Activated CD4-positive, alpha-beta T cell treated with anti-CD3 and anti-CD28 coated beads, Interleukin-2, amount 10 ng/mL, durations not matched to agents 24 days and 14 days (primary cell): ENCODE measurements at regions of chr17 and their contacts with region 1.

Region 1: DNA sequence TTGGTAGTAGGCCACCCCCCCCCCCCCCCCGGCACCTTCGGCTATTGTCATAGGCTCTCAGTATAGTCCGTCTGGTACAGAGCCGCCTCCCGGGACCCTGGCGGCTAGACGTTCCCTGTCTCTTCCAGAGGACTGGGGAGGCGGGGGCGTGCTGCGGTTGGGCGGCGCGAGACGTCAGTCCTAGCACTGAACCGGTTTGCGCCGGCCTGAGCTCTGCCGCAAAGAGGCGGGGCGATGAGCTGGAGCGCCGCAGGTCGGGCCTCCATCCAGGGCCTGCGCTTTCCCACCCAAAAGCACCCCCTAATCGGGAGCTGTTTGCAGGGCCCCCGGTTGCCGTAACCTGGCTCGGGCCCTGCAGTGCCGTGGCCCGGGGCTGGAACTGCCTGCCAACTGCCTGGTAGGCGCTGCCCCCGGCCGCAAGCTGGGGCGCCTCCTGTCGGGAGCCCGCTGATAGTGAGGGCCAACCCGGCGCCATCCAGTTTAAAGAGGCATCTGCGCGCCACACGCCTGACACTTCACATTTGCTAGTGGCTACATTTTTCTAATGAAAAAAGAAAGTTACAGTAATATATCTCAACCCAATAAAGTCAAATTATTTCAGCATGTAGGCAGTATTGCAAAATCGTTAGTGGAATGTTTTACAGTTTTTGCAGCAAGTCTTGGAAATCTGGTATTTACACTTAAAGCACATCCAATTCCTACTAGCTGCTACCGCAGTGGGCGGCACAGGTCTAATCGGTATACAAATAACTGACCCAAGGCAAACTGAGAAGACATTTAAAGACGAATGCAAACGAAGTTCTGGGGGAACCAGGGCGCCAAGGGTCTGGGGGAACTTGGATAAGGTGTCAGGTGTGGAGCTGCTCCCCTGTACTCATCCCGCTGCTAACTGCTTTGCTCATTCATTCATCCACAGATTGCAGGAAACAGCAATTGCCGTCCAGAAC is 748 bp upstream of the USP22 start:
- DNase-seq: peak; percentile 99
- H3K4me3 Mint-ChIP-seq: peak overlapping the region; percentile 82
- H3K27ac Mint-ChIP-seq: peak overlapping the region; percentile 91
- H3K4me1 Mint-ChIP-seq: peaks cover 25% of the 10 kb centered on the region
- H3K27me3 Mint-ChIP-seq: peaks cover 4% of the 10 kb centered on the region

Region 2: DNA sequence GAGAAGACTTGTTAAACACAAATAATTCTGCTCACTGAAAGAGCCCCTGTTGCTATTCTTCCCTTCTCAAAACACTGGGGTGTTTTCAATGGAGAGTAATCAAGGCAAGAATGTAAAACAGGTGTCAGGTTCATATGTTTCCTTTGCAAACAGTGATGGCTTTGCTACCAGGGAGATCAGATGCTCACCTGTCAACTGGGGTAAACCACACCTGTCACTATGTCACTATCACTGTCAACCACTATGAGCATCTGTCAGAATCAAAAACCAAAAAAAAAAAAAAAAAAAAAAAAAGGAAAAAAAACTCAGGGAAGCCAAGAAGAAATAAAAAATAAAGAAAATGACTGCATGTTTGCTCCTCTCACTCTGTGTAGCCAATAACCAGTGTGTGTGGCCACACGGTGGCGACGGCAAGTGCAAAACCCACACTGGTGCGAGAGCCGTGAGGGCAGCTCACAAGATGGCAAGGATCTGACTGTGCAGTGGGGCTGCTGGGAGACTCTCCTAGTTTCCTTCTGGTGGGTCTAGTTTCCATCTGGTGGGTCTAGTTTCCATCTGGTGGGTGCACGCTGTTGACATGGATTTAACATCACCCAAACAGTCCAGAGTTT is 23.5 kb before region 1 on chr17:
- intact Hi-C with region 1: loop called (anchors 1 kb)
- DNase-seq: peak; percentile 78
- H3K4me3 Mint-ChIP-seq: no peak overlapping the region
- H3K27ac Mint-ChIP-seq: no peak overlapping the region
- H3K4me1 Mint-ChIP-seq: peaks cover 22% of the 10 kb centered on the region
- H3K27me3 Mint-ChIP-seq: no peaks in the 10 kb centered on the region

Region 3: DNA sequence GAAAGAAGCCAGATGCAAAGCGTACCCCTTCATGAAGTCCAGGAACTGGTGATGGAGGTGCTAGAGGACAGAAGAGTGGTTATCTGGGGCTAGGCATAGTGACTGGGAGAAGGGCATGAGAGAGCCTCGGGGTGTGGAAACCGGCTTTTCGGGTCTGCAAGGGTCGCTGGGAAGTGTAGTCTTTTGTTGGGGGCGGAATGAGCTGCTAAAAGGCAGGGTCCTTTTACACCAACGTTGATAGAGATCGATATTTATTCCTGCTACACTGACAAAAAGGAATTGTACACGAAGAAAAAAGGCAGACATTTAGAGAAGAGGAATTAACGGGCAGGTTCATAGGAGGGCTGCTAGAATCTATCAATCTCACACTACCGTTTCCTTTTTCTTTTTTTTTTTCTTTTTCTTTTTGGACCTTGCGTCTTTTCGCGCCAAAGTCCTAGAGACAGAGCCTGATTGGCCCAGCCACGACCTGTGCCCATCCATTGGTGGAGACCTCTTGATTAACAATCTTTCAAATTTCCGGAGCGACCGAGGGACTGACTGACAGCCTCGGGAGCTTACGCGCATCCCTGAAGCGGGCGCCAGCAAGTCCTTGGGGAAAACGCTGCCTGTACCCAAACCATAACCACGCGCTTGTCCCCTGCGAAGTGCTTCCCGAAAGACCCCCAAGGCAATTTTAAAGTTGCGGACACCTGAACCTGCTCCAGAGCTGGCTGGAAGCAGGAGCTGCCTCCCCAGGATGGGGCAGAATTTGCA is 55.6 kb after region 1 on chr17:
- intact Hi-C with region 1: loop called (anchors 1 kb)
- DNase-seq: peak; percentile 93
- H3K4me3 Mint-ChIP-seq: peak overlapping the region; percentile 92
- H3K27ac Mint-ChIP-seq: peak overlapping the region; percentile 98
- H3K4me1 Mint-ChIP-seq: peaks cover 15% of the 10 kb centered on the region
- H3K27me3 Mint-ChIP-seq: no peaks in the 10 kb centered on the region

Region 4: GRCh38 chr17:21126645-21127510 is 83.3 kb after region 1 on chr17 and contains the start of gene DHRS7B:
- intact Hi-C with region 1: loop called (anchors 1 kb)
- DNase-seq: peak; percentile 99
- H3K4me3 Mint-ChIP-seq: peak within 1 kb of the TSS; percentile 89
- H3K27ac Mint-ChIP-seq: peak within 1 kb of the TSS; percentile 94
- H3K4me1 Mint-ChIP-seq: peaks cover 26% of the 10 kb centered on the region
- H3K27me3 Mint-ChIP-seq: no peaks in the 10 kb centered on the region
- total RNA-seq, gene DHRS7B: 19.4 and 22.8 TPM in 2 replicates

Region 5: DNA sequence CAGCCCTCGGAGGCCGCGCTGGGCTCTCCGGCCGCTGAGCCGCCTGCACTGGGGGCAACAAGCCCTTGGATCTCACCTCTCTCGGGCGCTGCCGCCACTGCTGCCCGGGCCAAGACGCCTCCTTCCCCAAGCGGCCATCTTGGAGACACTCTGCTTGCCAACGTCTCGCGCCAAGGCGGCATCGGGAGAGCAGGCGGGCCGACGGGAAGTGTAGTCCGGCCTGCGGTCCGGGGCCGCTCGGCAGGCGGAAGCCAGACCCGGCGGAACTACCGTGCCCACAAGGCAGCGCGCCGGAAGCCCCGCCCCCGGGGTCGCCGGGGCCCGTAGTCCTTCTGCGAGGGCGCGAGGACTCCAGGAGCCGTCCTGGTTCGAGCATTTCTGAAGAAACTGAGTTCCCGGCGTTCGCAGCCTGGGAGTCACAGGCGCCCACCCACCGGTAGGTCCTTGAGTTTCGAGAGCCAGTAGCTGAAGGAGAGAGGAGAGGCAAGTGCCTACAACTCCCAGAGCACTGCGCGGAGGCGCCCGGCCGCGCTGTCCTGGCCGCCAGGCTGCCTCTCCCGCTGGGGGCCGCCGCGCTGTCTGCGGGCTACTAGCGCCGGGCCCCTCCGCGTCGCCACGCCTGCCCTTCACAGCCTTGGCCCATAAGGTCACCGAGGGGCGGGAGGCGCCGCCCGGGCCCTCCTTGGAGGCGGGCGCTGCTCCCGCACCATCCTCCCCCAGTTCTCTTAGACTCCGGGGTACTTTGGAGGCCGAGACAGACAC is 170.6 kb after region 1 on chr17 and contains the start of gene TMEM11:
- intact Hi-C with region 1: loop called (anchors 1 kb)
- DNase-seq: peak; percentile 99
- H3K4me3 Mint-ChIP-seq: peak within 1 kb of the TSS; percentile 90
- H3K27ac Mint-ChIP-seq: peak within 1 kb of the TSS; percentile 95
- H3K4me1 Mint-ChIP-seq: peaks cover 48% of the 10 kb centered on the region
- H3K27me3 Mint-ChIP-seq: no peaks in the 10 kb centered on the region
- total RNA-seq, gene TMEM11: 33.5 and 34.7 TPM in 2 replicates